Astrocyte of the cerebellum (primary cell): ENCODE measurements at regions of chr9 and their contacts with region 1.

Region 1: GRCh38 chr9:98887918-98888510 is 55.7 kb upstream of the COL15A1 start:
- DNase-seq: no peak
- H3K4me3 ChIP-seq: no peak overlapping the region
- CTCF ChIP-seq: no peak

Region 2: GRCh38 chr9:98922721-98923435 is 34.9 kb after region 1 on chr9:
- in situ Hi-C with region 1: loop called (anchors 5 kb)
- DNase-seq: no peak
- H3K4me3 ChIP-seq: no peak overlapping the region
- CTCF ChIP-seq: no peak